ENCODE measurements at regions of chr12 and their contacts with region 1.

Region 1: GRCh38 chr12:85866986-85867776 is 6.9 kb upstream of the NTS start:
- DNase-seq: peak; percentile 78 to 89 (median 87)
- H3K4me3 ChIP-seq: peak overlapping the region in 3 of 7 experiments; percentile 14 to 53 (median 20)
- H3K27ac ChIP-seq: no peak overlapping the region
- H3K4me1 ChIP-seq: peaks cover 0 to 3% (median 0%) of the 10 kb centered on the region in 4 experiments
- H3K27me3 ChIP-seq: no peaks in the 10 kb centered on the region

Region 2: DNA sequence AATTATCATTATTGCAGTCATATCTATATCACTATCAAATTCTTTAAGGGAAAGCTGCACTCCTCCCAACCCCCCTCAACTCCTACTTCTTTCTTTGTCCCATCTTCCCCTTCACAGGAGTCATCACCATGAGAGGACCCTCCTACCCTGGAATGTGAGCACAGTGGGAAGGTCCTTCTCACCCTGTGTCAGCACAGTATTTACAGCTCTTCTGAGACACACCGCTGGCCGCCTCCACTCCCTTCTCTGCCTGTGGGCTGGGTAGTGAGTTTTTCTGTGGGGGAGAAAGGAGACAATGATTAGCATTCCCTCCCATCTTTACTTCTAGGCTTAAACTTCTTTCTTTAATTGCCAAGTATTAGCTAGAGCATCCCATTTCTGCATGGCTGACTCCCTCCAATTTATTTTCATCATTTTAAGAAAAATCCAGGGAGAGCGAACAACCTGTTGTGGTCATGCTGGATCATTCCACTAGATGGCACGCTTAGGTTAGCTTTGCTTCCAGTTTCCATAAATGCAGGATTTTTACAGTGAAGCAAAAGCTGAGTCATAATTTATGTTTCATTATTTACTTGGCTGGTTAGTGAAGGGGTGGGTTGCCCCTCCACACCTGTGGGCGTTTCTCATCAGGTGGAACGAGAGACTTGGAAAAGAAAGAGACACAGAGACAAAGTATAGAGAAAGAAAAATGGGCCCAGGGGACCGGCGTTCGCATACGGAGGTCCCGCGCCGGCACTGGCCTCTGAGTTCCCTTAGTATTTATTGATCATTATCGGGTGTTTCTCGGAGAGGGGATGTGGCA is 398.6 kb before region 1 on chr12:
- CTCF ChIA-PET with region 1: interaction called, 37 read pairs
- POLR2A ChIA-PET with region 1: no interaction called
- DNase-seq: peak; percentile 63 to 84 (median 80)
- H3K4me3 ChIP-seq: peak overlapping the region in 6 of 7 experiments; percentile 44 to 76 (median 54)
- H3K27ac ChIP-seq: peak overlapping the region in 1 of 2 experiments; percentile 22
- H3K4me1 ChIP-seq: peaks cover 8 to 40% (median 24%) of the 10 kb centered on the region in 4 experiments
- H3K27me3 ChIP-seq: no peaks in the 10 kb centered on the region

Region 3: DNA sequence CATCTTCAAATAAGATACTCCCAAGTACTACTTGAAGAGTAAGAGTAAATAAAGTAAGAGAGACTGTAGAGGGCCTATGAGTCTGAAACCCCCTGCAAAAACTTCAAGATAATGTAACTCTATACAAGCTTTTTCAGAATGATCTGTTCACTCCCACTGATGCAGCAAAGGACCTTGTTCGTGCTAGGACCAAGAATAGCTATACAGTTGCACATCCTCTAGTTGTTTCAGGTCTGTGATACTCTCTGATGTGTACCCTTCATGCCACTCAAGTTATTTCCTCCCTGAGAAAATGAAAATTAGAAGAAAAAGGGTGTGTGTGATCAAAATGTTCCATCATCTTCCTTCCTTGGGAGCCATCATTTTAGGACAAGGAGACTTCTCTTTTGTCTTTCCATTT is 382.8 kb before region 1 on chr12:
- CTCF ChIA-PET with region 1: interaction called, 10 read pairs
- POLR2A ChIA-PET with region 1: no interaction called
- DNase-seq: no peak
- H3K4me3 ChIP-seq: no peak overlapping the region
- H3K27ac ChIP-seq: no peak overlapping the region
- H3K4me1 ChIP-seq: no peaks in the 10 kb centered on the region
- H3K27me3 ChIP-seq: no peaks in the 10 kb centered on the region

Region 4: GRCh38 chr12:85575120-85576096 is 291.8 kb before region 1 on chr12:
- CTCF ChIA-PET with region 1: interaction called, 136 read pairs
- POLR2A ChIA-PET with region 1: no interaction called
- DNase-seq: peak; percentile 75 to 85 (median 78)
- H3K4me3 ChIP-seq: no peak overlapping the region
- H3K27ac ChIP-seq: no peak overlapping the region
- H3K4me1 ChIP-seq: peaks cover 0 to 2% (median 0%) of the 10 kb centered on the region in 4 experiments
- H3K27me3 ChIP-seq: no peaks in the 10 kb centered on the region

Region 5: DNA sequence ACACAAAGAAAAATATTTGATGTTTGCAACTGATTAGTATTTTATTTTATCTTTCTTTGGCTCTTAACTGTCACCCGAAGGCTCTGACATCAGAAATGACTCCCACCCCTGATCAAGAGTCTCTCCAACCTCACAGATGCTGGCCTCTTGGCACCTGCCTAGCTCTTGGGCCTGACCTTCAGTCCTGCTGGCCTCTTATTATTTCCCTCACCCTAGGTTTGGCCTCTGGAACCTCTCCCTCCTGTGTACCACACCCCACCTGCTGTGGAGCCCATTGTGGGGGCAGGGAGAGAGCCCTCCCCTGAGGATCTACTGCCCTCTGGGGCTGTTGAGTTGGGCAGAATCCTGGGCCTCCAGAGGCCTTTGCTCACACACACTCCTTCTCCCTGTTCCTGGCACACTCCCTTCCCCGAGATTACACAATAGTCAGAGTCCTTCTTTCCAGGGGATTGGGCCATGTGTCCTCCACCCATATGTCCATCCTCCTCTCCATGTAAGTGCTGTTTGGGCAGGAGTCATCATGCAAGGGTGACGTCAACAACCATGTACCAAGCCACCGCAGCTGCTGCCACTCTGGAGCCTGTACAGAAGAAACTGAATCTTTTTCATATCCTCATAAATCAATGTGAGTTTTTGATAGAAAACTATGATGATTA is 155.3 kb before region 1 on chr12:
- CTCF ChIA-PET with region 1: no interaction called
- POLR2A ChIA-PET with region 1: no interaction called
- DNase-seq: no peak
- H3K4me3 ChIP-seq: no peak overlapping the region
- H3K27ac ChIP-seq: no peak overlapping the region
- H3K4me1 ChIP-seq: no peaks in the 10 kb centered on the region
- H3K27me3 ChIP-seq: no peaks in the 10 kb centered on the region

Region 6: GRCh38 chr12:85765443-85765842 is 101.7 kb before region 1 on chr12:
- CTCF ChIA-PET with region 1: no interaction called
- POLR2A ChIA-PET with region 1: no interaction called
- DNase-seq: no peak
- H3K4me3 ChIP-seq: no peak overlapping the region
- H3K27ac ChIP-seq: no peak overlapping the region
- H3K4me1 ChIP-seq: peaks cover 0 to 3% (median 0%) of the 10 kb centered on the region in 4 experiments
- H3K27me3 ChIP-seq: no peaks in the 10 kb centered on the region

Region 7: DNA sequence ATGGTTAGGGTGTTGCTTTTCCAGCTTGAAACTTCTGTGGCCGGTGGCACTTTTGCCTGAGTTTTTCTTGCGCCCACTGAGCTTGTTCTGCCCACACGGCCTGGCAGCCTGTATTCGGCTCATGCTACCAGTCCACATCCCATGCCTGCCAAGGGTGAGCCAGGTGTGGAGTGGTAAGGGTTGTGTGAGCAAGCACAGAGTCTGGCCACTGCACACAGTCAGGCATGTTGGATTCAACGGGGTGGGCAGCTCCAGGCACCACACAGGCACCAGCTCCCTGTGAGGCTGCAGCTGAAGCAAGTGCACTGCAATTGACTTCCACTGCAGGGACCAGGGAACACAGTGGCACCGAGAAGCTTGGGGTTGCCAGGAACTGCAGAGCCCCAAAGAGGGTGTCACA is 11.9 kb before region 1 on chr12:
- CTCF ChIA-PET with region 1: interaction called, 27 read pairs
- POLR2A ChIA-PET with region 1: no interaction called
- DNase-seq: no peak
- H3K4me3 ChIP-seq: no peak overlapping the region
- H3K27ac ChIP-seq: no peak overlapping the region
- H3K4me1 ChIP-seq: no peaks in the 10 kb centered on the region
- H3K27me3 ChIP-seq: no peaks in the 10 kb centered on the region

Measured in common myeloid progenitor, CD34-positive (primary cell).